AG04450 (cell line): ENCODE measurements at regions of chr2 and their contacts with region 1.

Region 1: GRCh38 chr2:109171444-109172334 is 42.7 kb downstream of the SH3RF3 start:
- DNase-seq: peak; percentile 98
- H3K4me3 ChIP-seq: peak overlapping the region; percentile 54
- H3K27ac ChIP-seq: peak overlapping the region; percentile 99
- H3K27me3 ChIP-seq: no peaks in the 10 kb centered on the region
- CTCF ChIP-seq: peak; percentile 48

Region 2: DNA sequence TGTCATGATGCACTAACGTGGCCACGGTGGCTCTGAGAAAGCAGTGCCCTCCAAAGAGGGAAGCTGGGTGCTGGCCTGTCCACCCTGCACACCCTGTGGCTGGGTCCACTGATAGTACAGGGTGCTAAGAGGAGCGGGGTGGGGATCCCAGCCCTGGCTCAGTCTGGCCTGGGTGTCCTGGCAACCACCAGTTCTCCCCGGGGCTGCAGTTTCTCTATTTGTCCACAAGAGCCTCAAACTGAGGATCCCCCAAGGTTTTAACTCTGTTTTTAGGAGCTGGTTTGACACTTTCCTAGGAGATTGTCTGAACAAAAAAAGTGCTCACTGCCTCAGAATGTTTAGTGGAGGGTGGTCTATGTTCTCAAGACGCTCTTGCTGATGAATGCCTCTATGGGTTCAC is 211.7 kb before region 1 on chr2:
- CTCF ChIA-PET with region 1: no interaction called
- POLR2A ChIA-PET with region 1: no interaction called
- DNase-seq: no peak
- H3K4me3 ChIP-seq: no peak overlapping the region
- H3K27ac ChIP-seq: no peak overlapping the region
- H3K27me3 ChIP-seq: peaks cover 47% of the 10 kb centered on the region
- CTCF ChIP-seq: peak; percentile 32

Region 3: GRCh38 chr2:109218087-109218791 is 46.5 kb after region 1 on chr2:
- CTCF ChIA-PET with region 1: no interaction called
- POLR2A ChIA-PET with region 1: interaction called, 11 read pairs
- DNase-seq: peak; percentile 23
- H3K4me3 ChIP-seq: no peak overlapping the region
- H3K27ac ChIP-seq: peak overlapping the region; percentile 97
- H3K27me3 ChIP-seq: no peaks in the 10 kb centered on the region
- CTCF ChIP-seq: no peak